ENCODE measurements at regions of chrX and their contacts with region 1.

Region 1: GRCh38 chrX:17374619-17375366 is at the start of gene NHS:
- DNase-seq: peak; percentile 71
- H3K4me3 Mint-ChIP-seq: peak within 1 kb of the TSS; percentile 74
- H3K27ac Mint-ChIP-seq: peak within 1 kb of the TSS; percentile 17
- H3K4me1 Mint-ChIP-seq: no peaks in the 10 kb centered on the region
- H3K27me3 Mint-ChIP-seq: no peaks in the 10 kb centered on the region
- CTCF ChIP-seq: peak; percentile 52
- total RNA-seq, gene NHS: 3.6 and 6.2 TPM in 2 replicates

Region 2: DNA sequence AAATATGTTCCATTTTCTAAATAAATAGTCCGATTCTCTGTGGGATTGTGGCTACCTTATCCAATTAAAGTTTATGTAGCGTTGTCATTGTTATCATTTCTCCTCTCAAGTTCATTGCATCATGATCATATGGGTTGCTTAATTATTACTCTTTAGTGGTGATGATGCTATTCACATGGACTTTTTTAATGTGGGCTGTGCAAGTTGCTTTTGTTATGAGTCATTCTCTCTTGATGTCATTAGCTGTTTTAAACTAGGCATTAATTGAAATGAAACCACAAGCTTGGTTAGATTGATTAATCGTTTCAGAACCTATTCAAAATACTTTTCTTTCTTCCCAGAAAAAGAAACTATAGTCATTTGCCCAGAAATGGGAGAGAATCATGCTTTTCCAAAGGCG is 38.4 kb after region 1 on chrX:
- CTCF ChIA-PET with region 1: no interaction called
- POLR2A ChIA-PET with region 1: interaction called, 14 read pairs
- intact Hi-C with region 1: loop called (anchors 5 kb)
- DNase-seq: peak; percentile 80
- H3K4me3 Mint-ChIP-seq: peak overlapping the region; percentile 39
- H3K27ac Mint-ChIP-seq: no peak overlapping the region
- H3K4me1 Mint-ChIP-seq: peaks cover 32% of the 10 kb centered on the region
- H3K27me3 Mint-ChIP-seq: peaks cover 25% of the 10 kb centered on the region
- CTCF ChIP-seq: no peak

Region 3: DNA sequence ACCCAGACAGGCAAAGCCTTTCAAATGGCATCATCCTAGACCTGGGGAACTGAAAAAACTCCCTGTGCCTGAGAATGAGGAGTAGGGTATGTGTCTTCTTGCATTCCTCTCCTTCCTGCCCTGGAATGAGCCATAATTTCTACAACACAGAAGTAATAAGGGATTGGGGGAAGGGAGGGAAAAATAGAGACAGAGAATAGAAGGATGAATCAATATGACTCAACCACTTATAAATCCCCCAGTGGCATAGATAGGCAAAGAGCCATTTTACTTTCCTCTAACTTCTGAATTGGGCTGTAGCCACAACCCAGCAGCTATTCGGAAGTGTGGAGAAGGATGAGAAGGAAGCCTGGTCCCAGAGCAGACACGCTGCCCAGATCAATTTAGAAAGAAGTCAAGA is 100.1 kb after region 1 on chrX:
- CTCF ChIA-PET with region 1: no interaction called
- POLR2A ChIA-PET with region 1: no interaction called
- intact Hi-C with region 1: loop called (anchors 10 kb)
- DNase-seq: no peak
- H3K4me3 Mint-ChIP-seq: no peak overlapping the region
- H3K27ac Mint-ChIP-seq: no peak overlapping the region
- H3K4me1 Mint-ChIP-seq: peaks cover 6% of the 10 kb centered on the region
- H3K27me3 Mint-ChIP-seq: peaks cover 11% of the 10 kb centered on the region
- CTCF ChIP-seq: no peak

Region 4: GRCh38 chrX:17521871-17522693 is 147.3 kb after region 1 on chrX:
- CTCF ChIA-PET with region 1: no interaction called
- POLR2A ChIA-PET with region 1: no interaction called
- intact Hi-C with region 1: loop called (anchors 1 kb)
- DNase-seq: peak; percentile 56
- H3K4me3 Mint-ChIP-seq: no peak overlapping the region
- H3K27ac Mint-ChIP-seq: no peak overlapping the region
- H3K4me1 Mint-ChIP-seq: no peaks in the 10 kb centered on the region
- H3K27me3 Mint-ChIP-seq: peaks cover 23% of the 10 kb centered on the region
- CTCF ChIP-seq: no peak

Region 5: DNA sequence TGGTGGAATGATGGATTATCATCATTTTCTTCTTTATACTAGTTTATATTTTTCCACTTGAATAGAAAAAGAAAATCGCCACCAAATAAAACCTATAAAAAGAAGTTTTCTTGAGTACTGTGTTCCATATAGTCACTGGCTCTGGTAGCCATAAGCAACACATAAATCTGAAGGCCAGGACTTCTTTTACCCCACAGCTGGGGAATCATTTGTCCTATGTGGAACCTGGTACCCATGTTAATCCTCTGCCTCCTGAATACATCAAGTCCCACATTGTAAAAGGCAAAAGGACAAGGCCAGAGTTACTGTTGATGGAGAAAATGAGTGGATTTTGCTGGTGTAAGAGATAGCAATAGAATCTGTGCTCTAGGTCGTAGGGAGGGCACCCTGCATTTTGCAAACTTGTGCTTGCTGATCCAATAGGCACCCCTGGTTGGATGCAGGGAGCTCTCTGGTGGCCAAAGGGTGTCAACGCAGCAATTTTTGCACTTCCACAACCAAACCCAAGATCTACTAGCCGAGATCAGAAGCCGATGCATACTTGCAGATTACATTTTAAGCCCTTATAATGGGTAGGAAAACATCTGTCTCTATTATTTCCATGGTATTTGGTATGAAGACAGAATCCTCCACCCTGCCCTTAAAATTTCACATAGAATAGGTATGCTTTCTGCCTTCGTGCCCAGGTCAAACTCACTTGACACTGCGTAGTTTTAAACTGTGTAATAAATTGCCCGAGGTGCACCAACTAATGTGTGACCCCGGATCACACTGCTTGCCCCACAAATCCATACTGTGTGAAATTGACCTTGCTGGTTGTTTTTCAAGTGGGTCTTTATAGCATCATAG is 216.3 kb after region 1 on chrX:
- CTCF ChIA-PET with region 1: interaction called, 4 read pairs
- POLR2A ChIA-PET with region 1: interaction called, 7 read pairs
- intact Hi-C with region 1: loop called (anchors 1 kb)
- DNase-seq: peak; percentile 79
- H3K4me3 Mint-ChIP-seq: peak overlapping the region; percentile 38
- H3K27ac Mint-ChIP-seq: peak overlapping the region; percentile 30
- H3K4me1 Mint-ChIP-seq: peaks cover 30% of the 10 kb centered on the region
- H3K27me3 Mint-ChIP-seq: peaks cover 14% of the 10 kb centered on the region
- CTCF ChIP-seq: peak; percentile 86

Region 6: GRCh38 chrX:17689971-17690409 is 315.2 kb after region 1 on chrX:
- CTCF ChIA-PET with region 1: no interaction called
- POLR2A ChIA-PET with region 1: no interaction called
- intact Hi-C with region 1: loop called (anchors 1 kb)
- DNase-seq: peak; percentile 73
- H3K4me3 Mint-ChIP-seq: no peak overlapping the region
- H3K27ac Mint-ChIP-seq: no peak overlapping the region
- H3K4me1 Mint-ChIP-seq: no peaks in the 10 kb centered on the region
- H3K27me3 Mint-ChIP-seq: peaks cover 36% of the 10 kb centered on the region
- CTCF ChIP-seq: peak; percentile 64